Mammary epithelial cell (primary cell): ENCODE measurements at regions of chr4 and their contacts with region 1.

Region 1: DNA sequence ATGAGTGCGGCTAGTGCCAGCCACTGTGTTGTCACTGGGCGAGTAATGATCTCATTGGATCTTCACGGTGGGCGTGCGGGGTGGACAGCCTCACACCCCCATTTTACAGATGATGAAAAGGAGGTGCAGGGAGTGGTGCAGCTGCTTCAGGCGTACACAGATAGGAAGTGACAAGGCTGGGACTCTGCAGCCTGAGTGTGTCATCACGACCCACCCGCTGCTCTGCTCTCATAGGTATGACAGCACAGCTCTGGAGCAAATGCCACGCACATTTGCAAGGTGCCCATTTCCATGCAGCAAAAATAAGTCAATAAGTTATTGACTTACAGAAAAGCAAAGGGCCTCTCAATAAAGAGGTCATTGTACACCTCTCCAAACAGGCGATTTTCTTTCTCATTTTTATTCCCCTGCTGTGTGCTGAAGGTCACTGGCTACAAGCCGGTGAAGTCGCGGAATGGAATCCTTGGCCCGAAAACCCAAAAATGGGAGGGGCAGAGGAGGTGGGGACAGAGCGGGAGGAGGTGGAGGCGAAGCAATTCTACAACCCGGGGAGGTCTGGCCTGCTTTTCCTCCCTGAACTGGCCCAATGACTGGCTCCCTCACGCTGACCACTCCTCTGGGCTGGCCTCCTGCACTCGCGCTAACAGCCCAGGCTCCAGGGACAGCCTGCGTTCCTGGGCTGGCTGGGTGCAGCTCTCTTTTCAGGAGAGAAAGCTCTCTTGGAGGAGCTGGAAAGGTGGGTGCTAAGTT is at the start of gene SOD3:
- DNase-seq: no peak
- H3K4me3 ChIP-seq: no peak within 1 kb of the TSS
- H3K27ac ChIP-seq: no peak within 1 kb of the TSS
- H3K4me1 ChIP-seq: no peaks in the 10 kb centered on the region
- H3K27me3 ChIP-seq: peaks cover 8% of the 10 kb centered on the region
- CTCF ChIP-seq: no peak
- total RNA-seq, gene SOD3: 0.17 TPM in 1 of 2 donors, not detected in the other

Region 2: DNA sequence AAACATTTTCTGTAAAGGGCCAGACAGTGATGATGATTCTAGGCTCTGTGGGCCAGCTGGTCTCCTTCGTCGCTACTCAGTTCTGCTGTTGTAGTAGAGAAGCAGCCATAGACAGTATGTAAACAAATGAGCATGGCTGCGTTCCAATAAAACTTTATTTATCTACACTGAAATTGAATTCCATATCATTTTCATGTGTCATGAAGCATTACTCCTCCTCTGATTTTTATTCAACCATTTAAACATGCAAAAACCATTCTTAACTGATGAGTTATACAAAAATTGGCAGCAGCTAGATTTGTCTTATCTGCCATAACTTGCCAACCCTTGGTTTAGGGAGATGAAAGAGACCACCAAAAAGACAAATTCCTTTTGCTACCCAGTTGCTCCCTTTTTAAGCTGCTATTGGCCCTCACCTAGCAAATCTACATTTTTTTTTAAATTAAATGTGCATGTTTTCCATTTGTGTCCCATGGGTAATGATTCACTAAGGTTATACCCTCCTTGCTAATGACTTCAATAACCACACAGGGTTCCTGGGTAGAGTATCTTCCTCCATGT is 520.6 kb before region 1 on chr4:
- CTCF ChIA-PET with region 1: no interaction called
- dilution Hi-C with region 1: no loop called
- in situ Hi-C with region 1: no loop called
- intact Hi-C with region 1: no loop called
- DNase-seq: no peak
- H3K4me3 ChIP-seq: no peak overlapping the region
- H3K27ac ChIP-seq: no peak overlapping the region
- H3K4me1 ChIP-seq: peaks cover 3% of the 10 kb centered on the region
- H3K27me3 ChIP-seq: no peaks in the 10 kb centered on the region
- CTCF ChIP-seq: no peak

Region 3: DNA sequence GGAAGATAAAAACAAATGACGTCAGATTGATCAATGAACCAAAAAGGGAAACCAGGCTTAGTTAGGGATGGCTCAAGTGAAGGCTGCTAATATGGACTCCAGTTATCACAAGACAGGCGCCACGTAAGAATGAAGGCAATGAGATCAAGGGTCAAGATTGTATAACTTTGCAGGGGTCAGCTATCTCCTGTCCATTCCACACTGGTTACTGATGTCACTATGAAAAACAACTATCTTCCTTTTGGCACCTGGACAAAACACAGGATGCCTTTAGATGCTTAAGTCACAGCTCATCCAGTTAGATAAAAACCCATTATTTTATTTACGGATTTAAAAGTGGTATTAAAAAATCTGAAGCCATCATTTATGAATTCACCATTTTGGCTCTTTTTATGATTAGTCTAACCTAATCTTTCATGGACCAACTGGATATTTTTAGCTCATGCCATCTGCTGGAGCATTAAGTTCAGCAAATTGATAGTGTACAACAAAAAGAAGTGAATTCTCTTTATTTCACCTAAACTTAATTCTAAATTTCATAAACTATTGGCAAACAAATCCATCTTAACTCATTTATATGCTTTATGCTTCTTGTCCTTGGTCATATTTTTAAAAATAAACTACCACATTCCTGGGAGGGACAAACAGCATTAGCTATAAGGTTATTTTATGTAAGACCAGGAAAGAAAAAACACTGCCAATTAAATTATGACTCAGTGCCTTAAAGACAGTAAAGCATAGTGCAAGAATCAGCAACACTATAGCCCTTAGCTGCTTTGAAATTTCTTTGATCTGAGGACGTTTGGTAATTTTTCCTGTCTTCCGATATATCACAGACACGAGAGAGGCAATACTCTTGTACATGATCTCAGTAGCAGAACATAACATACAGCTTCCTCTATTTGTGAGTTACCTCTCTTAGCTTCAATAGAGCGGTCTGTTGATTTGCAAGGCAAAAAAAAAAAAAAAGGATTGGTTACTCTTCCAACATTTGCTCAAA is 237.8 kb before region 1 on chr4:
- CTCF ChIA-PET with region 1: interaction called, 3 read pairs
- dilution Hi-C with region 1: no loop called
- in situ Hi-C with region 1: no loop called
- intact Hi-C with region 1: loop called (anchors 1 kb)
- DNase-seq: no peak
- H3K4me3 ChIP-seq: no peak overlapping the region
- H3K27ac ChIP-seq: no peak overlapping the region
- H3K4me1 ChIP-seq: peaks cover 15% of the 10 kb centered on the region
- H3K27me3 ChIP-seq: no peaks in the 10 kb centered on the region
- CTCF ChIP-seq: no peak

Region 4: GRCh38 chr4:24850674-24851073 is 55.6 kb after region 1 on chr4:
- CTCF ChIA-PET with region 1: no interaction called
- dilution Hi-C with region 1: no loop called
- in situ Hi-C with region 1: no loop called
- intact Hi-C with region 1: no loop called
- DNase-seq: peak; percentile 67
- H3K4me3 ChIP-seq: no peak overlapping the region
- H3K27ac ChIP-seq: no peak overlapping the region
- H3K4me1 ChIP-seq: peaks cover 7% of the 10 kb centered on the region
- H3K27me3 ChIP-seq: no peaks in the 10 kb centered on the region
- CTCF ChIP-seq: no peak

Region 5: DNA sequence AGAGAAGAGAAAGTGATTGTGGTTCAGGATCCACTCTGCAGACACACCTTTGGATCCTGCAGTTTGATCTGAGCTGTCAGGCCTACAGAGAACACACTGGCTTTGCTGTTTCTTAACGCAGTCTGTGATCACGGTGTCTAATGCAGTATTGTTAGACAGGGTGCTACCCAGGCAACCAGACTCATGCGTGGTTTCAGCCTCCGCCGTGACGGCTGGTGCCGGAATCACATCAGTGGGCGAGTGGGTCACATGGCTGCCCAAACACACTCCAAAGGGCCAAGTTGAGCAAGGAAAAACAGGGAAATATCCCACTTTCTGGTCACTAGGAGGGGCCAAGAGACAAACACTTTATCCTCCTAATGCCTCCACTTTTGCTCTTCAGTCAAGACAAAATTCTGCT is 90.3 kb after region 1 on chr4:
- CTCF ChIA-PET with region 1: no interaction called
- dilution Hi-C with region 1: loop called (anchors 5 kb)
- in situ Hi-C with region 1: no loop called
- intact Hi-C with region 1: no loop called
- DNase-seq: no peak
- H3K4me3 ChIP-seq: no peak overlapping the region
- H3K27ac ChIP-seq: no peak overlapping the region
- H3K4me1 ChIP-seq: no peaks in the 10 kb centered on the region
- H3K27me3 ChIP-seq: peaks cover 1% of the 10 kb centered on the region
- CTCF ChIP-seq: no peak